ENCODE measurements at regions of chr13 and their contacts with region 1.

Region 1: DNA sequence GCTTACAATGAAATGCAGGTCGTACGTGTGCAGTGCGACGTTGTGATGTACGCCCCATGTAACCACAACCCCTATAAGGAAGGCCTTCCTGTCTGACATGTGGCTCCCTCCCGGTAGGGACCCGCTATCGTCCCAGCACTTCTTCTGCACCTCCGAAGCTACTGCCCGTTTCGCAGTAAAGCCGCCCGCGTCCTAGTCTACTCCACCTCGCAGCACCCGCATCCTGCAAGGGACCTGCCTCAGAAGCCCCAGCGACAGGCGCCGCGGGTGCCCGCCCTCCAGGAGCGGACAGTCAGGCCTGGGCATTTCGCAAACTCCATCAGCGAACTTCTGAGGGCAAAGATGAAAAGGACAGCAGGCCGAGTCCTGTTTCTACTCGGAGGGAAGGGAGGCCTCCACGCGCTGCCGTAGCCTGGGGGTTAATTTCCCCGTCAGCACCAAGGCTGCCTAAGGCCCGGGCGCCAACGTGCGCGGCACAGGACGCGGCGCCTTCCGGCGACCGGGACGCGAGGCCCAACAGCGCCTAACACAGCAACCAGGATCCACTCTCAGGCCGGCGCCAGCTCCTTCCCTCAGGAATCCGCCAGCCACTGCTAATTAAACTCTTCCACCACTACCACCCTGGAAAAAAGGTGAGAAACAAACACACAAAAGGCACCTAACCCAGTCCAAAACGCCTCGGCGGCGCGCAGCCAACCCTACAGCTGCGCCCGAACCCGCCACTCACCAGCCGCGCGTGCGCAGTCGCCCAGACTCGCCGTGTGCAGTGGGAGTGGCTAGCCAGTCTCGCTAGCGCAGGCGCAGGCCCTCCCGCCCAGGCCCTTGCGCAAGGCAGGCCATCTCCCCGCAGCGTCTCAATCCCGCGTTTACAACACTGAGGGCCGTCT is at the start of gene EEF1AKMT1:
- DNase-seq: peak; percentile 91 to 97 (median 94)
- ATAC-seq: peak; percentile 86
- H3K4me3 ChIP-seq: peak within 1 kb of the TSS; percentile 81 to 88
- H3K4me3 Mint-ChIP-seq: peak within 1 kb of the TSS; percentile 88
- H3K27ac ChIP-seq: peak within 1 kb of the TSS; percentile 95 to 96
- H3K27ac Mint-ChIP-seq: peak within 1 kb of the TSS; percentile 95
- H3K4me1 ChIP-seq: peaks cover 20% of the 10 kb centered on the region
- H3K4me1 Mint-ChIP-seq: peaks cover 34% of the 10 kb centered on the region
- H3K27me3 ChIP-seq: no peaks in the 10 kb centered on the region
- H3K27me3 Mint-ChIP-seq: no peaks in the 10 kb centered on the region
- CTCF ChIP-seq: no peak
- total RNA-seq, gene EEF1AKMT1: 1.5 to 2.4 TPM

Region 2: GRCh38 chr13:19633479-19634255 is 1139.8 kb before region 1 on chr13 and contains the start of gene MPHOSPH8:
- CTCF ChIA-PET with region 1: no interaction called
- POLR2A ChIA-PET with region 1: no interaction called
- intact Hi-C with region 1: loop called in 1 of 2 experiments (anchors 5 kb)
- DNase-seq: peak; percentile 88 to 98 (median 93)
- ATAC-seq: peak; percentile 95
- H3K4me3 ChIP-seq: peak within 1 kb of the TSS; percentile 82 to 89
- H3K4me3 Mint-ChIP-seq: peak within 1 kb of the TSS; percentile 100
- H3K27ac ChIP-seq: peak within 1 kb of the TSS; percentile 88 to 90
- H3K27ac Mint-ChIP-seq: peak within 1 kb of the TSS; percentile 100
- H3K4me1 ChIP-seq: peaks cover 35% of the 10 kb centered on the region
- H3K4me1 Mint-ChIP-seq: peaks cover 33% of the 10 kb centered on the region
- H3K27me3 ChIP-seq: no peaks in the 10 kb centered on the region
- H3K27me3 Mint-ChIP-seq: no peaks in the 10 kb centered on the region
- CTCF ChIP-seq: no peak
- total RNA-seq, gene MPHOSPH8: 32.9 to 35.6 TPM

Region 3: DNA sequence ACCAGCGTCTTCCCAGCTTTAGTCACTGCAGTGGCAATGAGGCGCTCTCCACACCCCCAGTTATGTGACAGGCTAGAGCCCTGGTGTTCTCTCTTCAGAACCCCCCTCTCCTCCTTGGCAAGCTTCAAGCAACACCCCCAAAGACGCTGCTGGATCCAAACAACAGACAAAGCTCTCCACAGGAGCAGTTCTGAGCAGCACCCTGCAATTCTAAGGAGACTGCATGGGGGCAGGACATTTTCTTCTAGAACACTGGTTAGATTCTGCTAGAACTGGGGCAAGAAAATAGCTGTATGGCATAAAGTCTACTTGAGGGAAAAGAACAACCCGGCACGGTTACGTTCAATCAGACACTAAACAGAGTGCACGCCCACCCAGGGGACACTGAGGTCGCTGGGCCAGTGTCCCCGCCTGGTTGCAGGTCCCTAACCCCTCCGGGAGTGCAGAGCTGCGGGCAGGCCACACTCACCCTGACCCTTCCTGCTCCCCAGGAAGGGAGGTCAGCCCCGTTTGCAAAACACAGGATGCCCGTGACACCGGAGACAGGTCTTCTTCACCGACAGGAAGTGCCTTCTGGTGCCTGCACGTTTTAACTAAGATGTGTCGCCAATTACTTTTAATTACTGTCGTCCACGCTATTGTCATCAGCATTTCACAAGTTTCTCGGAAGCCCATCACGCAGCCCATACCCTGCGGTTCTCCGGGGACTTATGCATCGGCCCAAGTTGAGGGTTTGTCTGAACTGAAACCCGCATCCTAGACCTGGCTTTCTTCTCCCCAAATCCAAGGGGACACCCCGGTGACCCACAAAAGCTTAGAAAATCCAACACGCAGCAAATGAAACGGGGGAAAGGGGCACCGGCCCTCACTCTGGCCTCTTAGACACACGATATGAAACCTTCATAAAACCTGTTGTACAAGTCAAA is 542.3 kb before region 1 on chr13:
- CTCF ChIA-PET with region 1: no interaction called
- POLR2A ChIA-PET with region 1: no interaction called
- intact Hi-C with region 1: no loop called
- DNase-seq: peak in 3 of 9 experiments; percentile 17 to 55 (median 37)
- ATAC-seq: peak; percentile 27
- H3K4me3 ChIP-seq: peak overlapping the region; percentile 44 to 52
- H3K4me3 Mint-ChIP-seq: peak overlapping the region; percentile 89
- H3K27ac ChIP-seq: peak overlapping the region in 1 of 2 experiments; percentile 14
- H3K27ac Mint-ChIP-seq: peak overlapping the region; percentile 74
- H3K4me1 ChIP-seq: peaks cover 6% of the 10 kb centered on the region
- H3K4me1 Mint-ChIP-seq: peaks cover 14% of the 10 kb centered on the region
- H3K27me3 ChIP-seq: peaks cover 0 to 9% of the 10 kb centered on the region in 2 experiments
- H3K27me3 Mint-ChIP-seq: peaks cover 23% of the 10 kb centered on the region
- CTCF ChIP-seq: no peak

Region 4: GRCh38 chr13:20475927-20476691 is 297.3 kb before region 1 on chr13:
- CTCF ChIA-PET with region 1: no interaction called
- POLR2A ChIA-PET with region 1: interaction called, 6 read pairs
- intact Hi-C with region 1: loop called (anchors 1 to 5 kb)
- DNase-seq: peak; percentile 48 to 92 (median 69)
- ATAC-seq: peak; percentile 88
- H3K4me3 ChIP-seq: peak overlapping the region; percentile 9 to 52
- H3K4me3 Mint-ChIP-seq: peak overlapping the region; percentile 81
- H3K27ac ChIP-seq: peak overlapping the region; percentile 48 to 91
- H3K27ac Mint-ChIP-seq: peak overlapping the region; percentile 98
- H3K4me1 ChIP-seq: peaks cover 34% of the 10 kb centered on the region
- H3K4me1 Mint-ChIP-seq: peaks cover 63% of the 10 kb centered on the region
- H3K27me3 ChIP-seq: no peaks in the 10 kb centered on the region
- H3K27me3 Mint-ChIP-seq: no peaks in the 10 kb centered on the region
- CTCF ChIP-seq: no peak

Region 5: GRCh38 chr13:20525690-20526544 is 247.5 kb before region 1 on chr13 and contains the start of gene CRYL1:
- CTCF ChIA-PET with region 1: no interaction called
- POLR2A ChIA-PET with region 1: no interaction called
- intact Hi-C with region 1: loop called in 1 of 2 experiments (anchors 10 kb)
- DNase-seq: peak; percentile 46 to 86 (median 74)
- ATAC-seq: peak; percentile 89
- H3K4me3 ChIP-seq: peak within 1 kb of the TSS; percentile 78 to 81
- H3K4me3 Mint-ChIP-seq: peak within 1 kb of the TSS; percentile 96
- H3K27ac ChIP-seq: peak within 1 kb of the TSS; percentile 75 to 87
- H3K27ac Mint-ChIP-seq: peak within 1 kb of the TSS; percentile 96
- H3K4me1 ChIP-seq: peaks cover 17% of the 10 kb centered on the region
- H3K4me1 Mint-ChIP-seq: peaks cover 22% of the 10 kb centered on the region
- H3K27me3 ChIP-seq: no peaks in the 10 kb centered on the region
- H3K27me3 Mint-ChIP-seq: peaks cover 7% of the 10 kb centered on the region
- CTCF ChIP-seq: no peak
- total RNA-seq, gene CRYL1: 8.0 to 8.5 TPM

Region 6: GRCh38 chr13:20703780-20704445 is 69.5 kb before region 1 on chr13:
- CTCF ChIA-PET with region 1: no interaction called
- POLR2A ChIA-PET with region 1: interaction called, 11 read pairs
- intact Hi-C with region 1: loop called (anchors 1 to 2 kb)
- DNase-seq: peak; percentile 56 to 90 (median 76)
- ATAC-seq: peak; percentile 86
- H3K4me3 ChIP-seq: no peak overlapping the region
- H3K4me3 Mint-ChIP-seq: no peak overlapping the region
- H3K27ac ChIP-seq: no peak overlapping the region
- H3K27ac Mint-ChIP-seq: no peak overlapping the region
- H3K4me1 ChIP-seq: peaks cover 11% of the 10 kb centered on the region
- H3K4me1 Mint-ChIP-seq: peaks cover 15% of the 10 kb centered on the region
- H3K27me3 ChIP-seq: peaks cover 0 to 3% of the 10 kb centered on the region in 2 experiments
- H3K27me3 Mint-ChIP-seq: peaks cover 12% of the 10 kb centered on the region
- CTCF ChIP-seq: peak; percentile 31

Region 7: DNA sequence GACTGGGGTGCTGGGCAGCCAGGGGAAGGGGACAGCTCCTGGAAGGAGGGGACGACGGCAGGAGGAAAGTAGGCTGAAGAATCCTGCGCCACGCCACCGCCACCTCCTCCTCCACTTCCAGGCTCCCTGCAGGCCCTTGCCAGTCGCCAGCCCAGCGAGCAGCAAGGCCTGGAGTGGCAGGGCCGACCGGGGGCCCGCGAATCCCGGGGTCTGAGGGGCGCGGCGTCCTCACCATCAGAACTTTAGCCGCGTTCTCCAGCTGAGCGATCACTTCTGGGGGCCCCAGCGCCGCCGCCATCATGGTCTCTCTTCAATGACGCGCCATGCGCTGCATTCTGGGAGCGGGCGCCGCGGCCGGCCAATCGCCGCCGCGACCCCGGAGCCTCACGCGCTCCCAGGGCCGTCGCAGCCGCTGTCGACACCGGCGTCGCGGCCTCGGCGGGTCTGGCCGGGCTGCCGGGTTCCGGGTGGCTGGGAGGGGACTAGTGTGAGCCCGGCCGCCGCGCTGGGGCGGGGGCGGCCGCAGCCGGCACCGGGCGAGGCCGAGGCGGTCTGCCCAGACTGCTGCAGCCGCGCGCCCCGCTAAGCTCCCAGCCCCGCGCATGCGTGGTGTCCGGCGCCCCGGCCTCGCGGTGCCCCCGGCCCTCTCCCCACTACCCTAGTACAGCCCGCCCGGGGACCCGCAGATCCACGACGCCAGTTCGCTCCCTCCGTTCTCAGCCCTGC is 129.2 kb after region 1 on chr13 and contains the start of gene XPO4:
- CTCF ChIA-PET with region 1: no interaction called
- POLR2A ChIA-PET with region 1: interaction called, 11 read pairs
- intact Hi-C with region 1: loop called (anchors 1 to 5 kb)
- DNase-seq: peak; percentile 55 to 88 (median 75)
- ATAC-seq: peak; percentile 96
- H3K4me3 ChIP-seq: peak within 1 kb of the TSS; percentile 81 to 89
- H3K4me3 Mint-ChIP-seq: peak within 1 kb of the TSS; percentile 94
- H3K27ac ChIP-seq: peak within 1 kb of the TSS; percentile 80 to 83
- H3K27ac Mint-ChIP-seq: peak within 1 kb of the TSS; percentile 93
- H3K4me1 ChIP-seq: peaks cover 11% of the 10 kb centered on the region
- H3K4me1 Mint-ChIP-seq: peaks cover 31% of the 10 kb centered on the region
- H3K27me3 ChIP-seq: no peaks in the 10 kb centered on the region
- H3K27me3 Mint-ChIP-seq: no peaks in the 10 kb centered on the region
- CTCF ChIP-seq: no peak
- total RNA-seq, gene XPO4: 23.8 to 24.5 TPM

Region 8: GRCh38 chr13:21603531-21604448 is 830.4 kb after region 1 on chr13 and contains the start of gene MICU2:
- CTCF ChIA-PET with region 1: no interaction called
- POLR2A ChIA-PET with region 1: no interaction called
- intact Hi-C with region 1: loop called in 1 of 2 experiments (anchors 10 kb)
- DNase-seq: peak; percentile 91 to 98 (median 96)
- ATAC-seq: peak; percentile 92
- H3K4me3 ChIP-seq: peak within 1 kb of the TSS; percentile 73 to 85
- H3K4me3 Mint-ChIP-seq: peak within 1 kb of the TSS; percentile 84
- H3K27ac ChIP-seq: peak within 1 kb of the TSS; percentile 84 to 97
- H3K27ac Mint-ChIP-seq: peak within 1 kb of the TSS; percentile 94
- H3K4me1 ChIP-seq: peaks cover 24% of the 10 kb centered on the region
- H3K4me1 Mint-ChIP-seq: peaks cover 47% of the 10 kb centered on the region
- H3K27me3 ChIP-seq: no peaks in the 10 kb centered on the region
- H3K27me3 Mint-ChIP-seq: peaks cover 9% of the 10 kb centered on the region
- CTCF ChIP-seq: no peak
- total RNA-seq, gene MICU2: 28.3 to 36.0 TPM

Measured in CD8-positive, alpha-beta T cell (primary cell).